ENCODE measurements at regions of chr6 and their contacts with region 1.

Region 1: GRCh38 chr6:90478789-90479602 is 107.9 kb downstream of the MAP3K7 start:
- DNase-seq: peak; percentile 93
- ATAC-seq: peak; percentile 99 to 100

Region 2: GRCh38 chr6:89940225-89941027 is 538.6 kb before region 1 on chr6:
- intact Hi-C with region 1: loop called (anchors 1 to 5 kb)
- DNase-seq: peak; percentile 72
- ATAC-seq: peak; percentile 93 to 95

Region 3: GRCh38 chr6:90285611-90286381 is 193.2 kb before region 1 on chr6:
- intact Hi-C with region 1: loop called in 1 of 2 experiments (anchors 10 kb)
- DNase-seq: peak; percentile 85
- ATAC-seq: peak; percentile 99

Region 4: GRCh38 chr6:90369024-90369519 is 109.9 kb before region 1 on chr6:
- intact Hi-C with region 1: no loop called
- DNase-seq: peak; percentile 64
- ATAC-seq: peak; percentile 96 to 99

Region 5: GRCh38 chr6:90383196-90383822 is 95.7 kb before region 1 on chr6:
- intact Hi-C with region 1: loop called in 1 of 2 experiments (anchors 5 kb)
- DNase-seq: no peak
- ATAC-seq: no peak

Region 6: GRCh38 chr6:90403489-90404381 is 75.3 kb before region 1 on chr6:
- intact Hi-C with region 1: no loop called
- DNase-seq: peak; percentile 57
- ATAC-seq: peak; percentile 93 to 96

Region 7: DNA sequence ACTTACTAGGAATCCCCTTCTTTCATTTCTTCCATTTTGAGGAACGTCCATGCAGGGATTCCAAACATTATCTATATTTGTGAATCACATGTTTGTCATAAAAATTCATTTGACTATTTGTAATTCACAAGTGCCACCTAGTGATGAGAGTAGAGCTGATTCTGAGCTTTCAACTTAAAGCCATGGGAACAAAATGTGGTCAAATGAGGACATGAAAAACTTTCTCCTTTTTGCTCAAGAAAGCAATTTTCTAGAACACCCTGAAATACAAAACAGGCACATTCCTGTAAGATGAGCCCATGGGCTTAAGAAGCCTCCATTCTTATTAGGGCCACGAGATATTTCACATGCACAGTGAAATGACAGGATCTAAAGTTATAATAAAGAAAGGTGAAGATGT is 95.6 kb after region 1 on chr6:
- intact Hi-C with region 1: no loop called
- DNase-seq: no peak
- ATAC-seq: no peak